Ascending aorta (tissue), 2 donors: ENCODE measurements at regions of chr4 and their contacts with region 1.

Region 1: DNA sequence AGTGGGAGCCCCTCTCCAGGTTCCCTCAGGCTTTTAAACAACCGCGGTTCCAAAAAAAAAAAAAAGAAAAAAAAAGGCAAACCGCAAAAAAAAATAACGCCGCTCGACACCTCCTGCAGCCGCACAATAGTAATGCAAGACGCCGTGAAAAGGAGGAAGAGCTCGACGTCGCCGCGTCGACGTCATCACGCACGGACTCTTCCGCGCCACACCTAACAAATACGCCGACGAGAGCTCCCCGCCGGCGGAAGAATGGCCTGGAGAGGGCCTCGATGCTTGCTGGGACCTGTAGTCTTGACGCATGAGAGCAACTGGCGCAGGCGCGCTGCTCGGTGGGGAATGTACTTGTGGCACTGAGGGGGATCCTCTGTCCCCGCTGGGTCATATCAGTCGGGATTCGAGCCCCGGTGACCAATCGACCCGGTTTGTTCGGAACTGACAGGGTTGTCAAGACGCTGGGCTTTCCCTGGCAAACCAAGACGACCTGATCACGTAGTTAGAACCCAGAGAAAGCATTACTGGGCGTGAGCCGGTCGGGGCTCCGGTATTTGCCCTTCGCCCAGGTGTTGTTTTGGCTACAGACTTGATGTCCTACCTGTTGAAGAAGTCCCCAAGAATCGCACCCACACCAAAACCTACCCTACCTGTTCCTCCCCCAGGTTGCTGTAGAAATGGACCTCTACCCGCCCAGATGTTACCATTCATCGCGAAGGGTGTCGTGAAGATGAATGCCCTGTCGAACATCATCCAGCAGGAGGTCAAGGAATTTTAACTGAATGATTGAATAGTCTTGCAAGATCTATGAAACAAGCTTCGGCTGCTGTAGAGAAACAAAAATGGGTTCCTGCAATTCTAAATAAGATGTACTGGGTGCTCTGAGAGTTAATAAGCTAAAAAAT is at the start of gene CBR4:
- DNase-seq: peak; percentile 95 to 99
- H3K4me3 ChIP-seq: peak within 1 kb of the TSS; percentile 67 to 68
- H3K27ac ChIP-seq: peak within 1 kb of the TSS; percentile 85 to 91
- H3K4me1 ChIP-seq: peaks cover 0 to 10% of the 10 kb centered on the region in 2 donors
- H3K27me3 ChIP-seq: no peaks in the 10 kb centered on the region
- CTCF ChIP-seq: peak in 1 of 3 experiments; percentile 45
- total RNA-seq, gene CBR4: 0.53 TPM

Region 2: GRCh38 chr4:168710353-168710946 is 299.9 kb before region 1 on chr4:
- intact Hi-C with region 1: loop called (anchors 2 kb)
- DNase-seq: peak in 1 of 2 donors; percentile 81
- H3K4me3 ChIP-seq: no peak overlapping the region
- H3K27ac ChIP-seq: peak overlapping the region; percentile 81 to 87
- H3K4me1 ChIP-seq: peaks cover 8 to 21% of the 10 kb centered on the region in 2 donors
- H3K27me3 ChIP-seq: no peaks in the 10 kb centered on the region
- CTCF ChIP-seq: peak; percentile 13 to 76 (median 70)

Region 3: DNA sequence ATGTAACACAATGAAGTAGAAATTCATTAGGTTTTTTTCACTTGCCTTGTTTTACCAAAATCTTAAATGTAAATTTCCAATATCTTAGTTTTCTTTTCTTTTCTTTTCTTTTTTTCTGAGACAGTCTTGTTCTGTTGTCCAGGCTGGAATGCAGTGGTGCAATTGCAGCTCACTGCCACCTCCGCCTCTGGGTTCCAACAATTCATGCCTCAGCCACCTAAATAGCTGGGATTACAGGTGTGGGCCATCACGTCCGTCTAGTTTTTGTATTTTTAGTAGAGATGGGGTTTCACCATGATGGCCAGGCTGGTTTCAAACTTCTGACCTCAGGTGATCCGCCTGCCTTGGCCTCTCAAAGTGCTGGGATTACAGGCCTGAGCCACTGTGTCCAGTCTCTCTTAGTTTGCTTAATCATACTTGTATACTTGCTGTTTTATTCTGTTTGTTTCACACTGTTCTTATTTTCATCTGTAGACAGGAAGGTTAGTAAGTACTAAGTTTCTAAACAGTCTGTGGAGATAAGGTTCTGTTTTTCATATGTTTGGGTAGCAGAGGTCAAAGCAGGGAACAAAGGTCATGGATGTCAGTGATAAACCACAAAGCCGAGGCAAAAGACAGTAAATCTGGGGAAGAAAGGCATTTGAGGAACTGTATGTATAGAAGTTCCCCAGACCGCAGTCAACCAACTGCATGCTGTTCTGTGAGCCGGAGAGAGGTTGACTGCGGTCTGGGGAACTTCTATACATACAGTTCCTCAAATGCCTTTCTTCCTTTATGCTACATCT is 129.4 kb before region 1 on chr4:
- intact Hi-C with region 1: no loop called
- DNase-seq: no peak
- H3K4me3 ChIP-seq: no peak overlapping the region
- H3K27ac ChIP-seq: peak overlapping the region; percentile 85 to 88
- H3K4me1 ChIP-seq: peaks cover 3 to 69% of the 10 kb centered on the region in 2 donors
- H3K27me3 ChIP-seq: no peaks in the 10 kb centered on the region
- CTCF ChIP-seq: no peak

Region 4: GRCh38 chr4:168923526-168924194 is 86.7 kb before region 1 on chr4:
- intact Hi-C with region 1: loop called (anchors 5 kb)
- DNase-seq: no peak
- H3K4me3 ChIP-seq: no peak overlapping the region
- H3K27ac ChIP-seq: no peak overlapping the region
- H3K4me1 ChIP-seq: no peaks in the 10 kb centered on the region
- H3K27me3 ChIP-seq: no peaks in the 10 kb centered on the region
- CTCF ChIP-seq: peak; percentile 50 to 69 (median 61)

Region 5: GRCh38 chr4:169115897-169116254 is 105.5 kb after region 1 on chr4:
- intact Hi-C with region 1: loop called (anchors 5 kb)
- DNase-seq: peak in 1 of 2 donors; percentile 73
- H3K4me3 ChIP-seq: no peak overlapping the region
- H3K27ac ChIP-seq: peak overlapping the region; percentile 77 to 90
- H3K4me1 ChIP-seq: peaks cover 0 to 9% of the 10 kb centered on the region in 2 donors
- H3K27me3 ChIP-seq: no peaks in the 10 kb centered on the region
- CTCF ChIP-seq: peak in 2 of 3 experiments; percentile 29 to 30

Region 6: DNA sequence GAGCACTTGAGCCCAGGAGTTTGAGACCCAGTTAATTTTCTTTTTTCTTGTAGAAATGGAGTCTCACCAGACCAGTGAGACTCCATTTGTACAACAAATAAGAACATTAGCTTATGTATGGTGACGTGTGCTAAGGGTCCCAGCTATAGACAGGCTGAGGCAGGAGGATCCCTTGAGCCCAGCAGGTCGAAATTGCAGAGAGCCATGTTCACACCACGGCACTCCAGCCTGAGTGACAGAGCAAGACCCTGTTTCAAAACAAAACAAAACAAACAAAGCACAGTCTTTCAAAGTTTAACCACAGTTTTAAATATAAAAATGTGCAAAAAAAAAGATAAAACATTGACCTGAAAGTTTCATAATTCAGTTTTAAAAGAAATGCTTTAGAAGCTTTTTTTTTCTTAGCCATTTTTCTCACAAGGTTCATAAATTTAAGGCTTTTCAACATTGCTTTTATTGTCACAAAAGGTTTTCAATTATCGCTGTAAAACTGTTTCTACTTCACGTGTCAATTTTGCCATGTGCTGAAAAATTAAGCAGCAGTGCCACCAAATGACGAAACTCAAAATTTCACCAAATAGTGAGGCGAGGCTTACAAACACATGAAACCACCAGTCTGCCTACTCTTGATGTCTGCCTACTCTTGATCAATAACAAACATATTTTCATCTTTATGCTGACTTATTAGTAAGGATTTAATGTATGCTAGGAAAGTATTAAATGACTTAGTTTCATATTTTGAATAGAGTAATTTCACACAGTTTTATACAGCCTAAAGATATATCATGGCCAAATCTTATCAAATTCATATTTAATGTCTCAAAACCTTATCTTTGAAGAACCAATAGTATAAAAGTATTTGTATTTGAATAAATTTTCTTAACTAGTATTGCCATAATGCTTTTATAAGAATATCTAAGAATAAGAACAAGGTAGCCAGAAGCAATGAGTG is 475.7 kb after region 1 on chr4:
- intact Hi-C with region 1: loop called (anchors 5 kb)
- DNase-seq: no peak
- H3K4me3 ChIP-seq: no peak overlapping the region
- H3K27ac ChIP-seq: no peak overlapping the region
- H3K4me1 ChIP-seq: no peaks in the 10 kb centered on the region
- H3K27me3 ChIP-seq: no peaks in the 10 kb centered on the region
- CTCF ChIP-seq: peak; percentile 33 to 60 (median 49)